Activated CD4-positive, alpha-beta memory T cell treated with anti-CD3 and anti-CD28 coated beads, Interleukin-2, amount 10 ng/mL, durations not matched to agents 7 days and 5 days (primary cell): ENCODE measurements at regions of chr3 and their contacts with region 1.

Region 1: GRCh38 chr3:156033428-156033827 is 87.0 kb upstream of the KCNAB1 start:
- DNase-seq: no peak
- H3K4me3 Mint-ChIP-seq: no peak overlapping the region
- H3K27ac Mint-ChIP-seq: no peak overlapping the region
- H3K4me1 Mint-ChIP-seq: no peaks in the 10 kb centered on the region
- H3K27me3 Mint-ChIP-seq: peaks cover 6% of the 10 kb centered on the region

Region 2: GRCh38 chr3:156044634-156044975 is 11.2 kb after region 1 on chr3:
- CTCF ChIA-PET with region 1: interaction called, 12 read pairs
- POLR2A ChIA-PET with region 1: no interaction called
- DNase-seq: no peak
- H3K4me3 Mint-ChIP-seq: no peak overlapping the region
- H3K27ac Mint-ChIP-seq: no peak overlapping the region
- H3K4me1 Mint-ChIP-seq: no peaks in the 10 kb centered on the region
- H3K27me3 Mint-ChIP-seq: peaks cover 14% of the 10 kb centered on the region